ENCODE measurements at regions of chr1 and their contacts with region 1.

Region 1: GRCh38 chr1:5514519-5515183 is 477.6 kb downstream of the NPHP4 start:
- DNase-seq: peak; percentile 46
- H3K4me3 ChIP-seq: no peak overlapping the region
- H3K27ac ChIP-seq: no peak overlapping the region
- H3K4me1 ChIP-seq: no peaks in the 10 kb centered on the region
- H3K27me3 ChIP-seq: no peaks in the 10 kb centered on the region
- CTCF ChIP-seq: peak; percentile 92 to 99 (median 97)
- POLR2A ChIP-seq: no peak

Region 2: GRCh38 chr1:5379176-5379759 is 135.4 kb before region 1 on chr1:
- intact Hi-C with region 1: no loop called
- DNase-seq: no peak
- H3K4me3 ChIP-seq: no peak overlapping the region
- H3K27ac ChIP-seq: no peak overlapping the region
- H3K4me1 ChIP-seq: no peaks in the 10 kb centered on the region
- H3K27me3 ChIP-seq: no peaks in the 10 kb centered on the region
- CTCF ChIP-seq: no peak
- POLR2A ChIP-seq: no peak

Region 3: GRCh38 chr1:5620990-5621389 is 106.3 kb after region 1 on chr1:
- intact Hi-C with region 1: loop called (anchors 5 kb)
- DNase-seq: no peak
- H3K4me3 ChIP-seq: no peak overlapping the region
- H3K27ac ChIP-seq: no peak overlapping the region
- H3K4me1 ChIP-seq: no peaks in the 10 kb centered on the region
- H3K27me3 ChIP-seq: no peaks in the 10 kb centered on the region
- CTCF ChIP-seq: peak in 3 of 4 experiments; percentile 63 to 83 (median 63)
- POLR2A ChIP-seq: no peak

Region 4: DNA sequence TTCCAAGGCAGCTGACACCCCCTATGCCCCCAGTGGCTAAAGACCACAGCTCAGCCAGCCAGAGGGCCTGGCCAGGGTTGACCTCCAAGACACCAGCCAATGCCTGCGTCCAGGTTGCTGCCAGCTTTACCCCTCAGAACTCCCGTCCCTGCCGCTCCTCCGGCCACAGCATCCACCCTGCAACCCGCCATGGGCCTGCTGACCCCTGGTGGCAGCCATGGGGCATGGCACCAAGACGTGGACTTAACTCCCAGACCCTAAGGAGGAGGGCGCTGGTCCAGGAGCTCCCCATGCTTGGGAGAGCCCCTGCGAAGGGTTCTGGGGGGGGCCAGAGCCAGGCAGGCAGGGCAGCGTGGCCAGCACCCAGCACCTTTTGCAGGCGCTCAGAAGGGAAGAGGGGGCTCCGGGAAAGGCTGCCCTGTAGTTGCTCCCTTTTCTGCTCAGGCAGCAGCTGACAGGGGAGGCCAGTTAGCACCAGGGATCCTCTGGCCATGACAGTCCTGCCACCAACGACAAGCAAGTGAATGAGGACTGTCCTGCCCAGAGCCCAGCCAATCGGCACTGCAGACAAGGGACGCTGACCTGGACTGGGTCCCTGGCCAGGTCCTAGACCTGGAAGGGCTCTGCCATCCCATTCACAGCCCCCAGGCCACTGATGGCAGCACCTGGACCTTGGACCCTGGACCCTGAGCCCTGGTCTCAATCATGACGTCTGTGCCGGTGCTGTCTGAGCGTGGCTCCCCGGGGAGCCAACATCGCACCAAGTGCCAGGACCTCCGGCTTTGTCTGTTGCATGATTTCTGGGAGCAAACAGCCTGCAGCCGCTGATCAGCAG is 231.3 kb after region 1 on chr1:
- intact Hi-C with region 1: loop called (anchors 2 kb)
- DNase-seq: peak; percentile 74
- H3K4me3 ChIP-seq: no peak overlapping the region
- H3K27ac ChIP-seq: no peak overlapping the region
- H3K4me1 ChIP-seq: no peaks in the 10 kb centered on the region
- H3K27me3 ChIP-seq: no peaks in the 10 kb centered on the region
- CTCF ChIP-seq: peak; percentile 97 to 98 (median 98)
- POLR2A ChIP-seq: no peak

Region 5: GRCh38 chr1:5819391-5820025 is 304.9 kb after region 1 on chr1:
- intact Hi-C with region 1: no loop called
- DNase-seq: no peak
- H3K4me3 ChIP-seq: no peak overlapping the region
- H3K27ac ChIP-seq: no peak overlapping the region
- H3K4me1 ChIP-seq: no peaks in the 10 kb centered on the region
- H3K27me3 ChIP-seq: peaks cover 5% of the 10 kb centered on the region
- CTCF ChIP-seq: no peak
- POLR2A ChIP-seq: no peak

Region 6: GRCh38 chr1:5915587-5916571 is 401.2 kb after region 1 on chr1:
- intact Hi-C with region 1: loop called (anchors 5 kb)
- DNase-seq: no peak
- H3K4me3 ChIP-seq: no peak overlapping the region
- H3K27ac ChIP-seq: no peak overlapping the region
- H3K4me1 ChIP-seq: no peaks in the 10 kb centered on the region
- H3K27me3 ChIP-seq: no peaks in the 10 kb centered on the region
- CTCF ChIP-seq: peak; percentile 16 to 66 (median 40)
- POLR2A ChIP-seq: no peak

Region 7: DNA sequence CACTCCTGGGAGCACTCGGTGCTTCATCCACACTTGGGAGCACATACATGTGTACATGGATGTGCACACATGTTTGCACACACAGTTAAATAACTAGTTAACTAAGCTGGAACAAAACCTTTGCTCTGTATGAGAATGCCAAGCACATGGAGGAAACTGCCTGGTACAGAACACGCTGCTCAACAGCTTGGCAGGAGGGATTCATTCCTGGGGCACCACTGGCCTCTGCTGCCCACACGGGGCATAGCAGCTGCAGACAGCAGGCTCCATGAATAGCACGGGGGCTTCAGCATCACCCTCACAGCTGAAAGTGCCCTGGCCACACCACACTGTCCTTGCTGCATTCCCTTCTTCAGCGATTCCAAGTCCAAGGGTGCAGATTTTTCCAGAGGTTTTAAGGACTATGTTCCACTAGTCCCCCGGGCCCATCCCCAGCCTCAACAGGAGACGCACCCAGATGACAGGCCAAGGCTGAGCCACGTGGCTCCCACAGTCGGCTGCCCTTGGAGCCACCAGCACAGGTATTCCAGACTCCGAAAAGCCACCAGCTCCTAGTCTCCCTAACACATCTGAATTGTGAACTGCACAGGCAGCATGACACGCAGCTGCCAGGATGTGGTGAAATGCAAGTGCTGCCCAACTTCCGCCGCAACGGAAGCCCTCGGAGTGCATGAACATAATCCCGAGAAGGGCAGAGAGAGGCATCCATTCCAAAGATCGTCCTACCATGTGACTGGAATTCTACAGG is 460.7 kb after region 1 on chr1:
- intact Hi-C with region 1: loop called (anchors 10 kb)
- DNase-seq: peak; percentile 44
- H3K4me3 ChIP-seq: no peak overlapping the region
- H3K27ac ChIP-seq: no peak overlapping the region
- H3K4me1 ChIP-seq: no peaks in the 10 kb centered on the region
- H3K27me3 ChIP-seq: no peaks in the 10 kb centered on the region
- CTCF ChIP-seq: peak; percentile 28 to 80 (median 47)
- POLR2A ChIP-seq: no peak